ENCODE measurements at regions of chr5 and their contacts with region 1.

Region 1: GRCh38 chr5:1385395-1386273 is 40.7 kb upstream of the CLPTM1L start:
- DNase-seq: peak; percentile 36
- H3K4me3 ChIP-seq: peak overlapping the region; percentile 27 to 60 (median 58)
- H3K27ac ChIP-seq: no peak overlapping the region
- H3K4me1 ChIP-seq: peaks cover 3% of the 10 kb centered on the region
- H3K27me3 ChIP-seq: peaks cover 0 to 11% of the 10 kb centered on the region in 2 experiments
- CTCF ChIP-seq: no peak
- POLR2A ChIP-seq: no peak

Region 2: DNA sequence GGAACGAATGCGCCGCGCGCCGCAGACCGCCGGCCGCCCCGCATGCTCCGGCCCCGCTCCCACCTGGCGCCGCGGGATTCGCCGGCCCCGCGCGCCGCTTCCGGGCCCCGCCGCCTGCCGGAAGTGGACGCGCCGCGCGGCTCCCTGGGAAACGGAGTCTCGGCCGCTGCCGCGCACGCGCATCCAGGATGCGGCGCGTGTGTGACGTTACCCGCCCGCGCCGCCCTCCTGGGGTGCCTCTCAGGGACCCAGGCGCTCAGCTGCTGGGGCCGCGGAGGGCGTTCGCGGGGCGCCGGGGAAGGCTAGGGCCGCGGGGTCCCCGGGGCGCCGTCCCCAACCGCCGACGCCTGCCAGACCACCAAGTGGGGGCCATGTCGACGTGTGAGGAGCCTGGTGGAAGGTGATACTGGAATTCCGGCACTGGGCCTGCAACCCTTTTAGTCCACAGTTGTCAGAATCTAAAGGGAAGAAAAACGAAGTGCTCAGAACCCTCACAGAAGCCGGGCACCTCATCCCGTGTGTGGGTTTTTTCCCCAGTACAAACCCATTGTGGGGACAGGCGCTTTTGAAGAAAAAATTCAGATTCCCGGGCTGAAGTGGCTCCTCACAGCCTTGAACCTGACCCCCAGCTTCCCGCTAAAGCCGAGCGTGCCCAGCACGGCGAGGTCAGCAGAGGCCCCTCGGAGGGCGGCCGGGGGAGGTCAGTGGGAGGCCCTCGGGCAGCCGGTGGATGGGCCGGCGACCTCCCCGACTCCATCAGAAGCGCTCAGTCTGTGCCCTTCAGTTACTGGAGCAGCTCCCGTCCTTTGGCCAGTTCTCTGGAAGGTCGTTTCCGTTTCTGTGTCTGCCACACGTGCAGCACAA is 40.4 kb before region 1 on chr5 and contains the start of gene CLPTM1L:
- CTCF ChIA-PET with region 1: no interaction called
- POLR2A ChIA-PET with region 1: no interaction called
- dilution Hi-C with region 1: no loop called
- intact Hi-C with region 1: loop called (anchors 2 kb)
- DNase-seq: peak; percentile 84
- H3K4me3 ChIP-seq: peak within 1 kb of the TSS; percentile 88 to 93 (median 90)
- H3K27ac ChIP-seq: peak within 1 kb of the TSS; percentile 83
- H3K4me1 ChIP-seq: peaks cover 9% of the 10 kb centered on the region
- H3K27me3 ChIP-seq: no peaks in the 10 kb centered on the region
- CTCF ChIP-seq: no peak
- POLR2A ChIP-seq: peak; percentile 65
- total RNA-seq, gene CLPTM1L: 113 and 116 TPM in 2 replicates